ENCODE measurements at regions of chr6 and their contacts with region 1.

Region 1: DNA sequence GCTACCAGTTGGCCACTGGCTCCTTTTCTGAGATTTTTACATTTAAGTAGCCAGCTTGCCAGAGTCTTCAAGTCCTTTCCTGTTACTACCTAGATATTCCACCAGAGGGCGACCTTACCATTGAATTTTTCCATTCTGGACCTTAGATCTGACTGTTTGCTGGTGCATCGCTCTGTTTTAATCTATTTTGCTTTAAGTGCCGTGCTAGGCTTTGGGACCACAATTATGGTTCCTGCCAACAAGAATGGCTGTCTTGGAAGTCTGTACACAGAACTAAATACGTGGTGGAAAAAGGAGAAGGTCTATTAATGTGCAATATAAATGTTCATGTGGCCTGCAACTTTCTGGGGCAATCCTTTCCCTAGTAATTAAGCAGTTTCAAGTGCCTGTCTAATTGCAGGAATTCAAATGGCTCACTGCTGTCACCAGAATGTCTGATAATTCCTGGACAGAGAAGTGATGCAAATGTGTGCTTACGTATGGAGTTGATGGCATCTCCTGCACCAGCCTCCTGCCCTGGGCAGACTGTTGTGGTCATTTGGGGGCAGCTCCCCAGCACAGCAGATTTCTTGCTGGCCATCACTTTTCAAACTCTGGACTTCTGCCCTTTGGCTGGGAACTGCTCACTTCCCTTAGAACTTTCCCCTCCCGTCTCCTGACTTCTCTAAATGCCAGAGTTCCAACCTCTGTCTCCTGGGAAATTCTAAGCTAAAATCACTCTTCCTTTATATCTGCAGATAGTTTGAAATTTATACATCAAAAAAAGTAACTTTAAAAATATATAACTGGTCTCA is 5.6 kb upstream of the HLA-DOA start:
- DNase-seq: peak; percentile 92
- ATAC-seq: peak; percentile 34
- H3K4me3 ChIP-seq: peak overlapping the region in 2 of 5 experiments; percentile 16 to 40
- H3K4me3 Mint-ChIP-seq: peak overlapping the region; percentile 69
- H3K27ac ChIP-seq: peak overlapping the region; percentile 2 to 100
- H3K27ac Mint-ChIP-seq: peak overlapping the region; percentile 90
- H3K4me1 ChIP-seq: peaks cover 51 to 57% of the 10 kb centered on the region in 2 donors
- H3K4me1 Mint-ChIP-seq: peaks cover 70% of the 10 kb centered on the region
- H3K27me3 ChIP-seq: no peaks in the 10 kb centered on the region
- H3K27me3 Mint-ChIP-seq: no peaks in the 10 kb centered on the region
- CTCF ChIP-seq: peak; percentile 85

Region 2: GRCh38 chr6:32763427-32763826 is 251.6 kb before region 1 on chr6 and contains the start of gene HLA-DQB2:
- CTCF ChIA-PET with region 1: no interaction called
- POLR2A ChIA-PET with region 1: no interaction called
- intact Hi-C with region 1: no loop called
- DNase-seq: peak; percentile 56
- ATAC-seq: no peak
- H3K4me3 ChIP-seq: peak within 1 kb of the TSS in 2 of 5 experiments; percentile 18 to 30
- H3K4me3 Mint-ChIP-seq: peak within 1 kb of the TSS; percentile 63
- H3K27ac ChIP-seq: no peak within 1 kb of the TSS
- H3K27ac Mint-ChIP-seq: peak within 1 kb of the TSS; percentile 69
- H3K4me1 ChIP-seq: peaks cover 0 to 4% of the 10 kb centered on the region in 2 donors
- H3K4me1 Mint-ChIP-seq: peaks cover 4% of the 10 kb centered on the region
- H3K27me3 ChIP-seq: peaks cover 0 to 14% (median 5%) of the 10 kb centered on the region in 4 experiments
- H3K27me3 Mint-ChIP-seq: peaks cover 47% of the 10 kb centered on the region
- CTCF ChIP-seq: no peak
- total RNA-seq, gene HLA-DQB2: 109 and 112 TPM in 2 replicates

Region 3: GRCh38 chr6:33000055-33000454 is 15.0 kb before region 1 on chr6:
- CTCF ChIA-PET with region 1: interaction called, 37 read pairs
- POLR2A ChIA-PET with region 1: interaction called, 11 read pairs
- intact Hi-C with region 1: loop called (anchors 1 kb)
- DNase-seq: peak; percentile 79
- ATAC-seq: peak; percentile 94
- H3K4me3 ChIP-seq: no peak overlapping the region
- H3K4me3 Mint-ChIP-seq: peak overlapping the region; percentile 11
- H3K27ac ChIP-seq: peak overlapping the region in 1 of 2 donors; percentile 31
- H3K27ac Mint-ChIP-seq: peak overlapping the region; percentile 53
- H3K4me1 ChIP-seq: peaks cover 10 to 13% of the 10 kb centered on the region in 2 donors
- H3K4me1 Mint-ChIP-seq: peaks cover 21% of the 10 kb centered on the region
- H3K27me3 ChIP-seq: no peaks in the 10 kb centered on the region
- H3K27me3 Mint-ChIP-seq: no peaks in the 10 kb centered on the region
- CTCF ChIP-seq: peak; percentile 70

Region 4: DNA sequence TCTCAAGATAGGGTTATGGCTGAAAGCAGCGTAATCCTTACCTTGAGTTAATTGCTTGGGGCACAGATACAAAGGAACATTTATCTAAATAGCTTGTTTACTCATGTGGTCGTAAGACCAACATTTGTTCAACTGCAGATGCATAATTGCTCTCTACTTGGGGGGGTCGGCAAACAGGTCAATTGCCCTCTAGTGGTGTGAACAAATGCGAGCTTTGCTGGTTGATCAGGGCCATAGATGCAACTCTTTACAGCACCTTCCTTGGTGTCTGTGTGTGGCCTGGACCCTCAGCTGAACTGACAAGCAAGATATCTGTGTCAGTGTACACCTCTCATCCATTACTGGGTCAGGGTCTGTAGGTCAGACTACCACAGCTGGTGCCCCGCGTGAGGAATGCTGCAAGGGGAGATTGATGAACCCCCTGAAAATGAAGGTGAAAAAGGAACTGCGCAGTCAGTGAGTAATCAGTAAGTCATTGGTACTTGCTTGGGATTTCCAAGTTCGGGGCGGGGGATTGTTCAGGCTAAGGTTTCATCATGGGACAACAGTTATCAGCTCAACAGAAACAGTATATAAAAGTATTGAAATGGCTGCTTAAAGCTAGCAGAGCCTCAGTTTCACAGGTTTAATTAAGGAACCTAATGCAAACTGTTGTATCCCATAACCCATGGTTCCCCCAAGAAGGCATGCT is 34.4 kb after region 1 on chr6:
- CTCF ChIA-PET with region 1: interaction called, 44 read pairs
- POLR2A ChIA-PET with region 1: interaction called, 3 read pairs
- intact Hi-C with region 1: no loop called
- DNase-seq: peak; percentile 40
- ATAC-seq: peak; percentile 41
- H3K4me3 ChIP-seq: peak overlapping the region in 1 of 5 experiments; percentile 8
- H3K4me3 Mint-ChIP-seq: peak overlapping the region; percentile 15
- H3K27ac ChIP-seq: no peak overlapping the region
- H3K27ac Mint-ChIP-seq: no peak overlapping the region
- H3K4me1 ChIP-seq: peaks cover 13 to 14% of the 10 kb centered on the region in 2 donors
- H3K4me1 Mint-ChIP-seq: peaks cover 21% of the 10 kb centered on the region
- H3K27me3 ChIP-seq: no peaks in the 10 kb centered on the region
- H3K27me3 Mint-ChIP-seq: no peaks in the 10 kb centered on the region
- CTCF ChIP-seq: no peak

Region 5: GRCh38 chr6:33075568-33076405 is 60.7 kb after region 1 on chr6 and contains the start of gene HLA-DPB1:
- CTCF ChIA-PET with region 1: interaction called, 576 read pairs
- POLR2A ChIA-PET with region 1: interaction called, 166 read pairs
- intact Hi-C with region 1: loop called (anchors 1 kb)
- DNase-seq: peak; percentile 93
- ATAC-seq: peak; percentile 81
- H3K4me3 ChIP-seq: peak within 1 kb of the TSS; percentile 79 to 99 (median 97)
- H3K4me3 Mint-ChIP-seq: peak within 1 kb of the TSS; percentile 97
- H3K27ac ChIP-seq: peak within 1 kb of the TSS; percentile 96 to 99
- H3K27ac Mint-ChIP-seq: peak within 1 kb of the TSS; percentile 98
- H3K4me1 ChIP-seq: peaks cover 48 to 50% of the 10 kb centered on the region in 2 donors
- H3K4me1 Mint-ChIP-seq: peaks cover 60% of the 10 kb centered on the region
- H3K27me3 ChIP-seq: no peaks in the 10 kb centered on the region
- H3K27me3 Mint-ChIP-seq: no peaks in the 10 kb centered on the region
- CTCF ChIP-seq: no peak
- total RNA-seq, gene HLA-DPB1: 1,068 and 1,104 TPM in 2 replicates

Region 6: DNA sequence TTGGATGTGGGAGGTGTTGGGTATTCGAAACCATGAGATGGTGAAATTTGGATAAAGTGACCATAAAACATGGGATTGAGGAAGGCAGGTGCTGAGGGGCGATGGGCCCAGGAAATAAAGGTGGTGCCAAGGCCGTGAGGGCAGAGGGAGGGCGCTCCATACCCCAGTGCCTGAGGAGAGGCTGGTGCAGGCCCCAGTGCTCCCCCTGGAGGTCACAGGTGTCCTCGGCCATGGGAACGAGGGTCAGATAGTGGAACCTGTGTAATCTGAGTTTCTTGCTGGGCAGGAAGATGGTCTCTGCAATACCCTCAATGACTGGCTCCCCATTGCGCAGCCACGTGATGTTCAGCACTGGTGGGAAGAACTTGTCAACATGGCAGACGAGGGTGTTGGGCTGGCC is 76.9 kb after region 1 on chr6:
- CTCF ChIA-PET with region 1: interaction called, 576 read pairs
- POLR2A ChIA-PET with region 1: interaction called, 8 read pairs
- intact Hi-C with region 1: loop called (anchors 1 kb)
- DNase-seq: peak; percentile 71
- ATAC-seq: peak; percentile 71
- H3K4me3 ChIP-seq: no peak overlapping the region
- H3K4me3 Mint-ChIP-seq: no peak overlapping the region
- H3K27ac ChIP-seq: peak overlapping the region; percentile 4 to 56
- H3K27ac Mint-ChIP-seq: peak overlapping the region; percentile 76
- H3K4me1 ChIP-seq: peaks cover 27 to 33% of the 10 kb centered on the region in 2 donors
- H3K4me1 Mint-ChIP-seq: peaks cover 41% of the 10 kb centered on the region
- H3K27me3 ChIP-seq: no peaks in the 10 kb centered on the region
- H3K27me3 Mint-ChIP-seq: no peaks in the 10 kb centered on the region
- CTCF ChIP-seq: peak; percentile 68

Region 7: DNA sequence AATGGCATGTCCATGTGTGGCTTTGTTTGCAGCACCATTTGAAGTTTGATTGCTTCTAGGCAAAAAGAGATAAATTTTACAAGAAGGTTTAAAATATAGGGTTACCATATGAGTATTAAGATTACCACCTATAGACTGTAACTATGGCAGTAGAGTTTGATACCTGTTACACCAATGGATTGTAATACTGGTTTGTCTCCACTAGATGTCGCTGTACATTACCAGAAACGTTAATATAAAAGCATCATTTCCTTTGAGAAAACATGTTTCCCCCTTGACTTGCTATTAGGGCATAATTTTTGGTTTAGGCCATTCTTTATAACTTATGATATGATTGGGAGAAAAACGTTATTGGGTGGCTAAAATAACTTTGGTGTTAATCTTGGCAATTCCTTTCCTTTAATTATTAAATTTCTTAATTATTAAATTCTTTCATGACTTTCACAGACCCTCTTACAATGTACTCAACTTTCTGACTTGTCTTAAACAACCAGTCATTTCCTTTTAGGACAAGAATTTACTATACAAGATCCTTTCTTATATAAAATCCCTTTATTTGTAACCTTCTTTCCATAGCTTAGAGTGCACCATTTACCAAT is 103.6 kb after region 1 on chr6:
- CTCF ChIA-PET with region 1: interaction called, 14 read pairs
- POLR2A ChIA-PET with region 1: interaction called, 4 read pairs
- intact Hi-C with region 1: no loop called
- DNase-seq: peak; percentile 82
- ATAC-seq: peak; percentile 48
- H3K4me3 ChIP-seq: no peak overlapping the region
- H3K4me3 Mint-ChIP-seq: peak overlapping the region; percentile 47
- H3K27ac ChIP-seq: no peak overlapping the region
- H3K27ac Mint-ChIP-seq: no peak overlapping the region
- H3K4me1 ChIP-seq: peaks cover 43 to 47% of the 10 kb centered on the region in 2 donors
- H3K4me1 Mint-ChIP-seq: peaks cover 46% of the 10 kb centered on the region
- H3K27me3 ChIP-seq: no peaks in the 10 kb centered on the region
- H3K27me3 Mint-ChIP-seq: peaks cover 3% of the 10 kb centered on the region
- CTCF ChIP-seq: peak; percentile 92

Region 8: DNA sequence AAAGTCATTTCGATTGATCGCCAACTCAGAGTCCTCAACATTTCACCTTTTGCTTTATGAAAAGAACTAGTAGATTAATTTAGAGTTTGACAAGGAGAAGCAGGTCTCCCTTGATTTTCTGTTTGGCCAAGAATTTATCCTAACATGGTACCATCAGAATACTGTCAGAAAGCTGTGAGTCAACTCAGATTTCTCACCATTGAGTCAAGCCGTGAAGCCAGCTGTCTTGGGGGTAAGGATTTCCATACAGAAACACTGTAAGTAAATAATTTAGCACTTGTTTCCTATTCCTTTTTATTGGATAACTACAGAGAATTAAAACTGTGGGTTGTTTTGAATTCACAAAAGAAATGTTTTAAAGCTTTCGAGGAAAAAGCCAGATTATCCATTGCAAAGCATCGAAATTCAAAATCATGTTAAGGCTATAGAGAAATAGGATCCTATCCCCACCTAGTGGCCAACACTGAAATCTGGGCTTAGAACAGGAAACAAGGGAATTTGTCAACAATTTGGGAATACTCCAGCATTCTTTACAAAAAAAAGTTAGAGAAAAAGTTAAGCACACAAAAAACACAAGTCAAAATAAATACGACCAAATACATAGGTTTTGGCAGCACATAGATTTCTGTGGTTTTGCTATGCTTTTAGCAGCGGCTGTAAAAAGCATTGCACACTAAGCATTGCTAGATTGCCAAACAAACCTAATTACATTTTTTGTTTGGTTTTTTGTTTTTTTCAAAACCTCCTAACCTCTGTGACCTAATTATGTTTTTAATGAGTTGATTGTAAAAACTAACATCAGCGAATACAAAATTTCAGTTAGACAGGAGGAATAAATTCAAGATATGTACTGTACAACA is 133.0 kb after region 1 on chr6:
- CTCF ChIA-PET with region 1: interaction called, 84 read pairs
- POLR2A ChIA-PET with region 1: no interaction called
- intact Hi-C with region 1: loop called (anchors 1 kb)
- DNase-seq: peak; percentile 60
- ATAC-seq: peak; percentile 59
- H3K4me3 ChIP-seq: no peak overlapping the region
- H3K4me3 Mint-ChIP-seq: no peak overlapping the region
- H3K27ac ChIP-seq: no peak overlapping the region
- H3K27ac Mint-ChIP-seq: no peak overlapping the region
- H3K4me1 ChIP-seq: peaks cover 7 to 14% of the 10 kb centered on the region in 2 donors
- H3K4me1 Mint-ChIP-seq: peaks cover 11% of the 10 kb centered on the region
- H3K27me3 ChIP-seq: peaks cover 0 to 7% (median under 1%) of the 10 kb centered on the region in 4 experiments
- H3K27me3 Mint-ChIP-seq: peaks cover 4% of the 10 kb centered on the region
- CTCF ChIP-seq: peak; percentile 80

Region 9: GRCh38 chr6:33215271-33216116 is 200.5 kb after region 1 on chr6:
- CTCF ChIA-PET with region 1: no interaction called
- POLR2A ChIA-PET with region 1: no interaction called
- intact Hi-C with region 1: no loop called
- DNase-seq: no peak
- ATAC-seq: no peak
- H3K4me3 ChIP-seq: no peak overlapping the region
- H3K4me3 Mint-ChIP-seq: no peak overlapping the region
- H3K27ac ChIP-seq: no peak overlapping the region
- H3K27ac Mint-ChIP-seq: no peak overlapping the region
- H3K4me1 ChIP-seq: peaks cover 14 to 15% of the 10 kb centered on the region in 2 donors
- H3K4me1 Mint-ChIP-seq: peaks cover 19% of the 10 kb centered on the region
- H3K27me3 ChIP-seq: peaks cover 0 to 44% (median 12%) of the 10 kb centered on the region in 4 experiments
- H3K27me3 Mint-ChIP-seq: peaks cover 46% of the 10 kb centered on the region
- CTCF ChIP-seq: no peak

Region 10: DNA sequence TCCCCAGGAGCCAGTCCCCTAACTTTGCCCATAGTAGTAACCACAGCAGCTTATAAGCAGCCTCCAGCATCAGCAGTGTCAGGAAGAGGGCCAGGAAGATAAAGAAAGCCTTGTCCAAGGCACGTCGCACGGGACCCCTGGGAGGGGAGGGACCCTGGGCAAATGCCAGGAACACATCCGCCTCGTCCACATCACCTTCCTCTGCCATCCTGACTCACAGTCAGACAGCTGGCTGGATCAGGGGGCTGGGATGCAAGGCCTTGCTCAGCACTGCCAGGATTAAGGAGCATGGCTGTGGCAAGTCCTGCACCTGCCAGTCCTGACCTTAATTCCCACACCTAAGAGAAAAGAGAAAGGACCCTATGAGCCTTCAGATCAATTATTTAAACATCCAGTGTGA is 314.0 kb after region 1 on chr6:
- CTCF ChIA-PET with region 1: no interaction called
- POLR2A ChIA-PET with region 1: no interaction called
- intact Hi-C with region 1: no loop called
- DNase-seq: no peak
- ATAC-seq: no peak
- H3K4me3 ChIP-seq: no peak overlapping the region
- H3K4me3 Mint-ChIP-seq: no peak overlapping the region
- H3K27ac ChIP-seq: peak overlapping the region in 1 of 2 donors; percentile 26
- H3K27ac Mint-ChIP-seq: peak overlapping the region; percentile 79
- H3K4me1 ChIP-seq: peaks cover 34 to 47% of the 10 kb centered on the region in 2 donors
- H3K4me1 Mint-ChIP-seq: peaks cover 43% of the 10 kb centered on the region
- H3K27me3 ChIP-seq: no peaks in the 10 kb centered on the region
- H3K27me3 Mint-ChIP-seq: no peaks in the 10 kb centered on the region
- CTCF ChIP-seq: no peak